ENCODE measurements at regions of chr2 and their contacts with region 1.

Region 1: GRCh38 chr2:148509288-148509902 is 135.2 kb upstream of the EPC2 start:
- DNase-seq: peak; percentile 77
- H3K4me3 Mint-ChIP-seq: peak overlapping the region; percentile 61
- H3K27ac Mint-ChIP-seq: peak overlapping the region; percentile 79
- H3K4me1 Mint-ChIP-seq: peaks cover 40% of the 10 kb centered on the region
- H3K27me3 Mint-ChIP-seq: peaks cover 2% of the 10 kb centered on the region

Region 2: GRCh38 chr2:147937744-147938349 is 571.5 kb before region 1 on chr2:
- intact Hi-C with region 1: loop called (anchors 1 kb)
- DNase-seq: no peak
- H3K4me3 Mint-ChIP-seq: no peak overlapping the region
- H3K27ac Mint-ChIP-seq: no peak overlapping the region
- H3K4me1 Mint-ChIP-seq: no peaks in the 10 kb centered on the region
- H3K27me3 Mint-ChIP-seq: no peaks in the 10 kb centered on the region

Region 3: DNA sequence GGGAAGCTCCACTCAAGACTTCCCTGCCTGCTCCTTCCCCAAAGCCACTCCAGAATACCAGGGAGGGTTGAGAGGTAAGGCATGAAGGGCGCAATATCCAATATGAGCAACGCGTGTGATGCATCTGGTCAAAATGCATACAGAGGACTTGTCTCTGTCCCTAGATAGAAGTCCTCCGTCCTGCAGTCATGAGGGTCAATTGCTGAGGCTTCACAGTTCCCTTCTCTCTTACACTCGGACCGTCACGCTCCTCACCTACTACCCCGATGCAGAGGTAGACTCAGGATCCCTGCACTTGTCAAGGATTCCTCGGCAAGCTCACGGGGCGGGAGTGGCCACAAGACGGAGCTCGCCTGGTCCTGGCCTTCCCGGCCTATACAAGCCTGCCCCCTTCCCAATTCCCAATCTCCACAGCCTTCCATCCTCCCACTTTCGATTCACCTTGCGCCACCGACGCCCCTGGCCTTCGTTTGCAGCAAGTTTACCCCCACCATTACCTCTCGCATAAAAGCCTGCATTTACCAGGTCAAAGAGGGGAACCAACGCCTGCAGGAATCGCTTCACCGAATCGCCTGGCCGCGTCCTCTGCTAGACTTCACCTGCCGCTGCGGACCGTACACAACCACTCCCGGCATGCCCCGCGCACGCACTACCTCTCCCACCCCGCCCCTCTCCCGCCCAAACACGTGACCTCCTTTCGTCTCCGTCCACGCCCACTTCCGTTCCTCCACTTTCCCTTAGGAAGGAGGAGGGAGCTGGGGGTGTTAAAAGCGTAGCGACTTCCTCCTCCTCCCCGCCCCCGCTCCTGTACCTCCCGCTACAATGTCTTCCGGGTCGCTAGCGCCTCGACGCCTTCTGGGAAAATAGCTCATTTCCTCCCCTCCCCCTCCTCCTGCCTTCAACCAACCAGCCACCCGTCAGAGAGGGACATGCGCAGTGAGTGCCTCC is 489.0 kb before region 1 on chr2 and contains the start of gene ORC4:
- intact Hi-C with region 1: loop called (anchors 1 kb)
- DNase-seq: peak; percentile 95
- H3K4me3 Mint-ChIP-seq: peak within 1 kb of the TSS; percentile 98
- H3K27ac Mint-ChIP-seq: peak within 1 kb of the TSS; percentile 95
- H3K4me1 Mint-ChIP-seq: peaks cover 40% of the 10 kb centered on the region
- H3K27me3 Mint-ChIP-seq: no peaks in the 10 kb centered on the region
- total RNA-seq, gene ORC4: 29.2 and 34.2 TPM in 2 replicates

Region 4: GRCh38 chr2:148298196-148298595 is 211.2 kb before region 1 on chr2:
- intact Hi-C with region 1: loop called (anchors 10 kb)
- DNase-seq: no peak
- H3K4me3 Mint-ChIP-seq: no peak overlapping the region
- H3K27ac Mint-ChIP-seq: no peak overlapping the region
- H3K4me1 Mint-ChIP-seq: no peaks in the 10 kb centered on the region
- H3K27me3 Mint-ChIP-seq: no peaks in the 10 kb centered on the region

Region 5: DNA sequence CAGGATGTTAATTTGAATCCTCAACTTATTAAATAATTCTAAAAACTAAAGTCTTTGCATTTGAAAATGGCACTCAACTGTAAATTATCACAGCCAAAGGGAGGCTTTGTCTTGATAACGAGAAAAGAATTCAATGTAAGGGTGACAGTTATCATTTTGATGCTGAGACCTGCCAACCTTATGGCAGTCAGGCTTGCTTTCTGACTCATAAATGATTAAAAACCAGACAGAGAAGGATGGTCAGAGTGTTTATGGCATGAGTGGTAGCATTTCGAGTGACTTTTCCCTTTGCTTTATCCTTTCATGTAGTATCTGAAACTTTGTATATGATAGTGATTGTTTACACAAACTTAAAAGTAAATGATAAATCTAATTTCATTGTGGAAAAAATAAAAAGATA is 81.2 kb after region 1 on chr2:
- intact Hi-C with region 1: no loop called
- DNase-seq: no peak
- H3K4me3 Mint-ChIP-seq: no peak overlapping the region
- H3K27ac Mint-ChIP-seq: no peak overlapping the region
- H3K4me1 Mint-ChIP-seq: no peaks in the 10 kb centered on the region
- H3K27me3 Mint-ChIP-seq: peaks cover 9% of the 10 kb centered on the region

Region 6: DNA sequence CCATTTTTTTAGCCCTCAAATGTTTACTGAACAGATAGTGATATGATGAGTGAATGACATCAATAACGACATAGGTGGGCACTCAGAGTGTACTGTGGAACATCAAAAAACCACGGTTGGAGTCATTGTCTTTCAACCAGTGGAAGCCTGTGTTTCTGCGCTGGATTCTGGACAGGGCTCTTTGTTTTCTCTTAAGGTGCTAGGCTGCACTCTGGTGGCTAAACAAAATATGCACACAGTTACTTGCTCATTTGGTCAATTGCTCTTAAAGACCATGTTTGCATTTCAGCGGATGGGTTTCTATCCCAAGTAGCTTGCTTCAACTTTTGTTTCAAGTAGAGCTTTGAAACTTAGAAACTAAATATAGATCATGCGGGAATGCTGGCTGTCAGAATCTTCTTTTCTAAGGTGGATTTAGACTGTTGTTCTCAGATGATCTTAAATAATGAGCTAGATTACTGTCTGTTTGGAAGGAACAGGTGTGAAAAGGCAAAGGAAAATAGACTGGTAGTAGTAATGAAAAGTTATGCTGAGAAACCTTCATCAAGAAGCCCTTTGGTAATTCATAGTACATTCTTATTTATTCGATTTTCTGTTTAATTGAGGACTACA is 480.6 kb after region 1 on chr2:
- intact Hi-C with region 1: loop called (anchors 5 kb)
- DNase-seq: peak; percentile 30
- H3K4me3 Mint-ChIP-seq: no peak overlapping the region
- H3K27ac Mint-ChIP-seq: no peak overlapping the region
- H3K4me1 Mint-ChIP-seq: peaks cover 4% of the 10 kb centered on the region
- H3K27me3 Mint-ChIP-seq: no peaks in the 10 kb centered on the region